Dorsolateral prefrontal cortex (tissue), 120 donors: ENCODE measurements at regions of chr5 and their contacts with region 1.

Region 1: GRCh38 chr5:10457682-10458574 is 16.2 kb downstream of the ROPN1L start:
- DNase-seq: no peak
- H3K4me3 ChIP-seq: no peak overlapping the region
- H3K27ac ChIP-seq: peak overlapping the region in 52 of 59 donors; percentile 1 to 88 (median 65)
- H3K27me3 ChIP-seq: no peaks in the 10 kb centered on the region
- CTCF ChIP-seq: peak in 6 of 56 donors; percentile 3 to 31 (median 12)

Region 2: DNA sequence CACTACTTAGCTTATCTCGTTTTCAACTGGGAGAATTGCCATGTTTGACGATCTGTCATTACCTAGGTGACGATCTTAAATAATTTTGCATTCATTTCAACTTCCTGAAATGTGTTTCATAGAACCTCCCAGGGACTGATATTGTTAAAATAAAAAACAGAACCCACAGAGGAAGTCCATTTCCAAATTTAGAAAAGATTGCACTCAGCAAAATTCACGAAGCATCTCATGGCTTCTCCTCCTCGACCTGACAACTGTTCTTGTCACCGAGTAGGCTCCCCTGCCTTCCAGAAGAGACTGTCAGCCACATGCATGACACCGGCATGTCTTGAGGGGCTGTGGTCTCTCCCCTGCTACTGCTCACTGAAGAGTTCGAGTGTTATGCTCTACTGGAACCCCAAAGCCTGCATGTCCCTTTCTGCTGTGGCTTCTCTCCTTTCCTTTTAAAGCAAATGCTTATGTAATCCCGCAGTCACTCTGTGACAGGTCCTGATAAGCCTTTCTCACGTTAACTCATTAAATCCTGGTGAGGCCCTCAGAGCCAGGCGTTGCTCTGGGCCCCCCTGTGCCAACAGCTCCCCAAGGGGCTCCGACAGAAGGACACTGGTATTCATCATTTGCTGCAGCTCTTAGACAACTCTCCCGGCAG is 79.1 kb after region 1 on chr5:
- intact Hi-C with region 1: loop called in 1 of 2 experiments (anchors 5 kb)
- DNase-seq: peak in 2 of 10 donors; percentile 9 to 23
- H3K4me3 ChIP-seq: peak overlapping the region in 5 of 59 donors; percentile 1 to 24 (median 10)
- H3K27ac ChIP-seq: peak overlapping the region in 58 of 59 donors; percentile 24 to 94 (median 78)
- H3K27me3 ChIP-seq: no peaks in the 10 kb centered on the region
- CTCF ChIP-seq: no peak

Region 3: DNA sequence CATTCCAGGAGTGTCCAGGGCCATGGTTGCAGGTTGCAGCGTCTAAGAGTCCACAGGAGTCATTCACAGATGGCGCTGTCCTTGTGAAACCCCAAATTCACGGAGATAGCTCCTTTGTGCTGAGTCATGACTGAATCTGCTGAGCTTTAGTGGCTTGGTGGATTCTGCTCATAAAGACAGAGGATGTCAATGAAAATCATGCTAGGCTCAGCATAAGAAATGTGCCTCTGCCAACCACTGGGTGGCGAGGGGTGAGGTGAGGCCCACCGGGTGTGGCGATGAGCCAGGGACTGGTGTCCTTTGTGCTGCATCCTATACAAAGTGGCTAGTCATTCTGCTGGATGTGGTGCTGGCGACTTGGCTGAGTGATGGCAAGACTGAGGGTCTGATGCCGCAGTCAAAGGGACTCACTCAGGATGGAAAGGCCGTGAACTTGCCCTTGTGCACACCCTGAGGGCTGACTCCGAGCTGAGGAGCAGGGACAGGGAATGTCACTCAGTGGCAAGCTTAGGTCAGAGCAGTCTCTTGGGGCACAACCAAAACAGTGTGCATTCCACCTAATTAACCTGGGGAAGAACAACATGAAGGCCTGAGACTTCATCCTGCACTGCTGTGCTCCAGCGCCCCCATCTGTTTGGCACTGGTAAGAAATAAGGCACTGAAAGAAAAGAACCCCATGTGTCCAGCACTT is 231.6 kb after region 1 on chr5:
- intact Hi-C with region 1: loop called in 1 of 2 experiments (anchors 5 kb)
- DNase-seq: peak in 2 of 10 donors; percentile 33 to 50
- H3K4me3 ChIP-seq: no peak overlapping the region
- H3K27ac ChIP-seq: no peak overlapping the region
- H3K27me3 ChIP-seq: no peaks in the 10 kb centered on the region
- CTCF ChIP-seq: peak in 20 of 56 donors; percentile 6 to 39 (median 16)